ENCODE measurements at regions of chr22 and their contacts with region 1.

Region 1: GRCh38 chr22:37394341-37394740 is 32.9 kb downstream of the ELFN2 start:
- DNase-seq: no peak

Region 2: GRCh38 chr22:37212167-37212906 is 182.0 kb before region 1 on chr22 and contains the start of gene SSTR3:
- in situ Hi-C with region 1: no loop called
- DNase-seq: no peak
- total RNA-seq, gene SSTR3: not detected in 2 replicates

Region 3: DNA sequence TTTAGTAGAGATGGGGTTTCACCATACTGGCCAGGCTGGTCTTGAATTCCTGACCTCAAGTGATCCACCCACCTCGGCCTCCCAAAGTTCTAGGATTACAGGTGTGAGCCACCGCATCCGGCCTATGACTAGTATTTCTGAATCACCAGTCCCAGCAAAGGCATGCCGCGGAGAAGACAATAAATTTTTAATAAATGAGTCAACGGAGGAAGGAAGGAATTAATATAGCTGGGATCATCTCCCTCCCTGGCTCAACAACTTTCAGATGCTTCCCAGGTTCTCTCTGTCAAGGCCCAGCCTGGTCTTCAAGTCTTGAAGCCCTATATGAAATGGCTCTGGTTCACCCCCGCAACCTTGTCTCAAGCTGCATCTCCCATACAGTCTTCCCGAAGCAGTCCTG is 66.3 kb before region 1 on chr22:
- in situ Hi-C with region 1: loop called (anchors 10 kb)
- DNase-seq: no peak

Measured in SK-MEL-5 (cell line).